ENCODE measurements at regions of chr17 and their contacts with region 1.

Region 1: DNA sequence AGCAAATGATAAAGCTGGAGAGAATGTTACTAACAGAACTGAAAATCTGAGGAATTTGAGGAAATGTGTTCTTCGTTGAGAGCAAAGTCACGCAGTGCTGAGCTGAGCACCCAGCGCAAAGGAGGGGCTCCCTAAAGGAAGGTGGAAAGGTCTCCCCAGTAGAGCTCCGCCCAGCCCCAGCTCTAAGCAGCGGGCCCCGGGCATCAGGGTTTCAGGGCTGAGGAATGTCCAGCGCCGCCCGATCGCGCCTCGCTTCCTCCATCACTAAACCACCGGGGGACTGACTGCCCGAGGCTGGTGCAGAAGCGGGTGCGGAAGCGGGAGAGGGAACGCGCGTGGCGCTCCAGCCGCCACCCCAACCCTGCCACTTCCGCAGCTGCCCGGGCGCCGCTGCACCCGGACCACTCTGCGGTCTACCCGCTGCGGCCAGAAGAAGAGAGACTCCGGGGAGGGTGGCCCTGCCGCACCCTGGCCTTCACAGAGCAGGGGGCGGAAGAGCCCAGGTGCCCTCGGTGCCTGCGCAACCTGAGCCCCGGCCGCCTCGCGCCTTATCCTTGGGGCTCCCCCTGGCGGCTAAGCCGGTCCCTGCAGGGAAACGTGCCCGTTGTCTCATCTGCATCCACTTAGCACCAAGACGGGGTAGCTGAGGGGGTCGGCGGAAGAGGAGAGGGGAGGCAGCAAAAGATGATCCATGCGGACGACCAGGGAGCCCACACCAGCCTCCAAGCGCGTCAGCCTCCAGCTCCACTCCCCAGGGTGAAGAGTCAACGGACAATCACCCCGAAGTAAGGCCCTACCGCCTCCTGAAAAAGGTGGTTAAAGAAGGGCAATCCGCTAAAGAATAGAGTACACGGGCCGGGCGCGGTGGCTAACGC is 12.4 kb upstream of the GUCY2D start:
- DNase-seq: peak; percentile 94
- ATAC-seq: peak; percentile 89 to 93 (median 91)
- H3K4me3 ChIP-seq: peak overlapping the region; percentile 37
- H3K4me3 Mint-ChIP-seq: peak overlapping the region; percentile 89
- H3K27ac ChIP-seq: peak overlapping the region; percentile 48
- H3K27ac Mint-ChIP-seq: peak overlapping the region; percentile 83 to 91
- H3K4me1 ChIP-seq: peaks cover 16% of the 10 kb centered on the region
- H3K4me1 Mint-ChIP-seq: peaks cover 22 to 25% of the 10 kb centered on the region in 2 donors
- H3K27me3 ChIP-seq: no peaks in the 10 kb centered on the region
- H3K27me3 Mint-ChIP-seq: peaks cover 9 to 11% of the 10 kb centered on the region in 2 donors
- CTCF ChIP-seq: peak; percentile 90

Region 2: GRCh38 chr17:7823581-7824397 is 166.2 kb before region 1 on chr17:
- intact Hi-C with region 1: loop called (anchors 1 kb)
- DNase-seq: no peak
- ATAC-seq: no peak
- H3K4me3 ChIP-seq: no peak overlapping the region
- H3K4me3 Mint-ChIP-seq: no peak overlapping the region
- H3K27ac ChIP-seq: no peak overlapping the region
- H3K27ac Mint-ChIP-seq: no peak overlapping the region
- H3K4me1 ChIP-seq: no peaks in the 10 kb centered on the region
- H3K4me1 Mint-ChIP-seq: no peaks in the 10 kb centered on the region
- H3K27me3 ChIP-seq: no peaks in the 10 kb centered on the region
- H3K27me3 Mint-ChIP-seq: peaks cover 8 to 19% of the 10 kb centered on the region in 2 donors
- CTCF ChIP-seq: no peak

Region 3: DNA sequence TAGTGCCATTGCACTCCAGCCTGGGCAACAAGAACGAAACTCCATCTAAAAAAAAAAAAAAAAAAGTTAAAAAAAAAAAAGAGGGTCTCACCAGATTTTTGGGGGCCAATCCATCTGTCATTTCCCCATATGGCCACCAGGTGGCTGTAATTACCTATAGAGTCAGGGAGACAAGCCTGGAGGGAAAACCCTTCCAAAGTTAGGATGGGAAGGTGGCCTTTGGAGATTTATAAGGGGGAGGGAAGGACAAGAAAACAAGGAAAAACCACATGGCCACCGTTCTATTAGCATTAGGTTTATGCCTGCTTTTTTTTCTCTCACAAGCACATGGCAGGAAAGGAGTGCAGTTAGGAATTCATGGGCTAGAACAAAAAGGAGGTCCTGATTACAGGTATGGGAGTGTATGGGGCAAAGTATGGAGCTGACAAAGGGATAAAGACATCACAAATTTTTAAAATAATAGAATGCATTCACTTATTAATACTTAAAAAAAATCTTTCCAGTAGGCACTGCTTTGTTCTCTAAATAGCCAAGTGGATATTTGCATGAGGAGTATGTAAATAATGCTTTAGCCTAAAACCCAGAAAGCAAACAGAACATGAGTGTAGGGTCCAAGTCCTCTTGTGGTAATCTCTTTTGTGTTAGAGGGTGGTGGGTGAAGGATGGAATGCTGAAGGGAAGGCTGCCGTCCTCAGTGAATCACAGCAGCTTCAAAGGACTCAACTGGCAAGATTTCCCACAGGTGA is 127.2 kb before region 1 on chr17:
- intact Hi-C with region 1: loop called (anchors 1 kb)
- DNase-seq: peak; percentile 25 to 76
- ATAC-seq: no peak
- H3K4me3 ChIP-seq: no peak overlapping the region
- H3K4me3 Mint-ChIP-seq: no peak overlapping the region
- H3K27ac ChIP-seq: no peak overlapping the region
- H3K27ac Mint-ChIP-seq: no peak overlapping the region
- H3K4me1 ChIP-seq: peaks cover 18% of the 10 kb centered on the region
- H3K4me1 Mint-ChIP-seq: peaks cover 20 to 23% of the 10 kb centered on the region in 2 donors
- H3K27me3 ChIP-seq: no peaks in the 10 kb centered on the region
- H3K27me3 Mint-ChIP-seq: no peaks in the 10 kb centered on the region
- CTCF ChIP-seq: peak; percentile 84